Esophagus muscularis mucosa (tissue), 4 donors: ENCODE measurements at regions of chr14 and their contacts with region 1.

Region 1: DNA sequence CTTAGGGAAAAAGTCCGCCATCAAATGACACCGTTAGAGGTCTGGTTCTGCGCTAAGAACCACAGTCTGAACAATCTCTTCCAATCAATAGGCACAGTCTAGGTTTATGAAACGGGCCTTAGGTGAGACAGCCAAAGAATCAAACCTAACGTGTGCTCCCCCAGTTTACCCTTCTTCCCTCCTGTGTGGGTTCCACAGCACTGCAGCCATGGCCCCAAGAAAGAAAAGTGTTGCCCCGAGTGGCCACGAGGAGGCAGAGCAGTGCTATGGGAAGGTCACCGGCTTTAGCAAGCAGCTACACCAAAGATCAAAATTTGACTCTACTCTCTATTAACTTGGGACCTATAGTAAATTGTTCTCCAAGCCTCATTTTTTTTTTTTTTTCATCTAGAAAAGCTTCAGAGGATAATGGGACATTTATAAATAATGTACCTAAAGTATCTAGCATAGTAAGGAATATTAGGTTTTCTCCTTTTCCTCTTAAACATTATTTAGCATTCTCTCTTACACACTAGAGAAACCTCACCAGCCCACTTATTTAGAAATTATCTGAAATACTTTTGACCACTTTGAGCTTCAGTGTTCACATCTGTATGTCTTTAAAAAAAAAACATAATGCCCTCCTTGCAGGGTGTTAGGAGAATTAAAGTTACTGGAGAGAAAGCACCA is 70.2 kb upstream of the GPHB5 start:
- DNase-seq: no peak
- H3K4me3 ChIP-seq: no peak overlapping the region
- H3K27ac ChIP-seq: no peak overlapping the region
- H3K4me1 ChIP-seq: no peaks in the 10 kb centered on the region
- H3K27me3 ChIP-seq: no peaks in the 10 kb centered on the region
- CTCF ChIP-seq: peak; percentile 80 to 88 (median 86)
- EP300 ChIP-seq: no peak
- POLR2A ChIP-seq: no peak

Region 2: DNA sequence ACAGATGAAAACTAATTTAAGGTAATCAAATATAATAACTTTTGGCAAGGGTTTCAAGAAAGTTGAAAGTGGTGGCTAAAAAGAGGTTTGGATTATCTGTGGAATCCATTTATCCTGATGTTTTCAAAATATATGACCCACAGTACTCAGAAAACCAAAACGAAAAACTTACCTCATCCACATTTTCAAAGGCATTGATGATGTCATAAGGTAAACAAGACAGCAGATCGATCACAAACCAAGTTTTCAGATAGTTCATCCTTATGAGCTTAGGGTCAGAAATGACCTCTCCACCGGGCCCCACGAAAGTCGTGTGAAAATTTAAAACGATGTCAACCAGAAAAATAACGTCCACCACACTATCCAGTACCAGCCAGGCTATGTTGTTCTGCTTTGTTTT is 408.2 kb before region 1 on chr14:
- intact Hi-C with region 1: no loop called
- DNase-seq: no peak
- H3K4me3 ChIP-seq: no peak overlapping the region
- H3K27ac ChIP-seq: no peak overlapping the region
- H3K4me1 ChIP-seq: no peaks in the 10 kb centered on the region
- H3K27me3 ChIP-seq: no peaks in the 10 kb centered on the region
- CTCF ChIP-seq: no peak
- EP300 ChIP-seq: no peak
- POLR2A ChIP-seq: no peak

Region 3: DNA sequence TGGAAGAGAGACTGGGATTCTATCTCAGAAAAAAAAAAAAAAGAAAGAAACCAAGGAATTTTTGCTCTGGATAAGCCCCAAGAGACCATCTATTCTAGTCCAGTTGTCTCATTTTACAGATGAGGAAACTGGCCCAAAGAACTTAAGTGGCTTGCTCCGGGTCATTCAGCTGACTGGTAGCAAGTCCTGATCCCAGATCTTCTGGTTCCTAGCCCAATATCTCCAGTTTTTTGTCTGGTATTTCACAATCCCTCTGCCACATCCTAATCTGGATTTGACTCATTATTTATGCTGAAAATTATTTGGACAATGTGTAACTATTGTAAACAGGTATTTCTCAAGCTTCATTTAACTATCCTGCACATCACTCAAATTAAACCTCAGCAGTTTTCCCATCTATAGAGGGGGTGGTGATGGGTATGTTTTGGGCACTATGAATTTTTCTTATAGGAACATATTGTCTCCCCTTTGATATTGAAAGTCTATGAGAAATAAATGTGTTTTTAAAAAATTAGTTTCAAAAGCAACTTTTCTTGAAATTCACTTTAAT is 110.9 kb after region 1 on chr14:
- intact Hi-C with region 1: no loop called
- DNase-seq: no peak
- H3K4me3 ChIP-seq: no peak overlapping the region
- H3K27ac ChIP-seq: peak overlapping the region in 2 of 4 donors; percentile 28 to 38
- H3K4me1 ChIP-seq: peaks cover 13 to 60% (median 48%) of the 10 kb centered on the region in 4 donors
- H3K27me3 ChIP-seq: no peaks in the 10 kb centered on the region
- CTCF ChIP-seq: no peak
- EP300 ChIP-seq: no peak
- POLR2A ChIP-seq: no peak

Region 4: DNA sequence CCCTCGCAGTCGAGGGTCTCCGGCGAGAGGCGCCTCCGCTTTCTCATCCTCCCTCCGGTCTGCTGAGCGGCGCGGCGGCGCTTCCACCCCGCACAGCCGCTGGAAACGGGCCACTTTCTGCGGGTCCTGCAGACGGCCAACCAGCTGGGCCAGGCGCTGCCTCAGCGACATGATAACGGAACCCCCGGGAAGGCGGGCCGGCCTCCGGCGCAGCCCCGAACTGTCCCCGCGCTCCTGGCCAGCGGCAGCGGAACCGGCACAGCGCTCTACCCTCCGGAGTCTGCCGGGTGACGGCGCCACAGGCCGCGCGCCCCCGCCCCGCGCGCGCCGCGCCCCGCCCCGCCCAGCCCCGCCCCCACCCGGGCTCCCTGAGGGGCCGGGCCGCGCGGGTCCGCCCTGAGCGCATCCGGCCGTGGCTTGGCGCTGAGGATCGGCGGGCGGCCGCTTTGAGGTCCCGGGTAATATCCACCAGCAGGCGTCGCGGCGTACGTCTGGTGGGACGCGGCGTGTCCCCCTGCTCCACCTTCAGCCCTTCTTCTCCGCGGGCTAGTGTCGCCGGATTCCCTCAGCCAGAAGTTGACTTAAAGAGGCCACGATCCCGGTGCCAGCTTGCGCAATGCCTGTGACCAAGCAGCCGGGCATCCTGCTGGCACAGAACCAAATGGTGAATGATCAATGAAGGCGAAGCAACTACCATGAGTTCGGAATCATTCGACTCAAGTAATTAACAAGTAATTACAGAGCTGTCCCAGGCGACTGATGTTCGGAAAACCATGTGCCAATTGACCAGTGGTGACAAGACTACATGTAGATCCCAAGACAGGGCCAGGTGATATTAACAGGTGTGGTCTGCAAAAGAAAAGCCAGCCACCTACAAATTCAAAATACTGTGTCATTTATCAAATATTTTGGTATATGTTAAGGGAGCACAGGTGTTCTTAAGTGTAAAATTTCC is 339.2 kb after region 1 on chr14 and contains the start of gene SGPP1:
- intact Hi-C with region 1: loop called (anchors 10 kb)
- DNase-seq: peak; percentile 94
- H3K4me3 ChIP-seq: peak within 1 kb of the TSS; percentile 91 to 96 (median 95)
- H3K27ac ChIP-seq: peak within 1 kb of the TSS; percentile 89 to 94 (median 91)
- H3K4me1 ChIP-seq: peaks cover 14 to 39% (median 30%) of the 10 kb centered on the region in 4 donors
- H3K27me3 ChIP-seq: no peaks in the 10 kb centered on the region
- CTCF ChIP-seq: peak; percentile 19 to 47 (median 42)
- EP300 ChIP-seq: no peak
- POLR2A ChIP-seq: peak; percentile 35
- total RNA-seq, gene SGPP1: 18.0 to 26.8 (median 19.3) TPM